PC-9 (cell line): ENCODE measurements at regions of chr12 and their contacts with region 1.

Region 1: GRCh38 chr12:55829967-55830600 is 697 bp upstream of the DNAJC14 start:
- DNase-seq: peak in 1 of 2 experiments; percentile 27
- H3K4me3 ChIP-seq: peak overlapping the region; percentile 96
- H3K27ac ChIP-seq: peak overlapping the region; percentile 36
- H3K4me1 ChIP-seq: peaks cover 39% of the 10 kb centered on the region
- H3K27me3 ChIP-seq: no peaks in the 10 kb centered on the region
- CTCF ChIP-seq: no peak

Region 2: GRCh38 chr12:55780685-55781084 is 49.4 kb before region 1 on chr12:
- CTCF ChIA-PET with region 1: no interaction called
- POLR2A ChIA-PET with region 1: no interaction called
- intact Hi-C with region 1: no loop called
- DNase-seq: no peak
- H3K4me3 ChIP-seq: no peak overlapping the region
- H3K27ac ChIP-seq: no peak overlapping the region
- H3K4me1 ChIP-seq: no peaks in the 10 kb centered on the region
- H3K27me3 ChIP-seq: no peaks in the 10 kb centered on the region
- CTCF ChIP-seq: no peak

Region 3: DNA sequence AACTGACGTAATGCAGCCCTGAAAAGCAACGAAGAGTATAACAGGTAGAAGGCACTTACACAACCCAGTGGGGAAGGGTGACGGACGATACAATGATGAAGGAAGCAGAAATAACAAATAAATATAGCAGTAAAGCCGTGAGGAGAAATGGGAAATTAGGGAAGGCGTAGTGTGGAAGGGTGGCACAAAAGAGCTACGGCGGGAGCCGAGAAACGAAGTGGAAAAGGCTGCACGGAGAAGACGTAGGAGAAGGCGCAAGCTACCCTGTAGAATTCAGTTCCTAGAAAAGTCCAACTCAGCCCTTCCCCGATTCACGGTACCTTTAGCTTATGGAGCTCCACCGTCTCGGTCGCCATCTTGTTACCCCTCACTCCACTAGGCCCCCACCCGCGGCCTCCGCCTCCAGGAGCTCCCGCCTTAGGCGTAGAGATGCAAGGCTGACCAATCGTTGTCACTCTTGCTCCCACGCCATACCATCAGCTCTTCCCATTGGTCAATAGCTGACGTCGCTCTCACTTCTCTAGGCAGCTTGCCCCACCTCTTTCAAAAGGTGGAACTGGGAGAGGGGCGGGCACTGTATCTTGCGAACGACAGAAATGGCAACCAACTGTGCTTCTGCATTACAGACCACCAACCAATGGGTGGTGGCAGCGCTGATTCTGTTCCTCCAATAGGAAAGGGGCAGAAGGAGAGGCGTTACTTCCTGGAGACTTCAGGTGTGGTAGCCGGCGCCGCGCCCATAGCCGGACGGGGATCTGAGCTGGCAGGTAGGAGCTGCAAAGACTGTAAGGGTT is 12.5 kb before region 1 on chr12 and contains the starts of genes ORMDL2 and SARNP:
- CTCF ChIA-PET with region 1: interaction called, 10 read pairs
- POLR2A ChIA-PET with region 1: interaction called, 59 read pairs
- intact Hi-C with region 1: loop called (anchors 1 kb)
- DNase-seq: peak; percentile 96 to 99
- H3K4me3 ChIP-seq: peak within 1 kb of the TSS; percentile 72
- H3K27ac ChIP-seq: peak within 1 kb of the TSS; percentile 51
- H3K4me1 ChIP-seq: peaks cover 18% of the 10 kb centered on the region
- H3K27me3 ChIP-seq: no peaks in the 10 kb centered on the region
- CTCF ChIP-seq: no peak
- total RNA-seq, gene ORMDL2: 22.5 and 22.9 TPM in 2 replicates
- total RNA-seq, gene SARNP: 65.6 and 74.8 TPM in 2 replicates

Region 4: DNA sequence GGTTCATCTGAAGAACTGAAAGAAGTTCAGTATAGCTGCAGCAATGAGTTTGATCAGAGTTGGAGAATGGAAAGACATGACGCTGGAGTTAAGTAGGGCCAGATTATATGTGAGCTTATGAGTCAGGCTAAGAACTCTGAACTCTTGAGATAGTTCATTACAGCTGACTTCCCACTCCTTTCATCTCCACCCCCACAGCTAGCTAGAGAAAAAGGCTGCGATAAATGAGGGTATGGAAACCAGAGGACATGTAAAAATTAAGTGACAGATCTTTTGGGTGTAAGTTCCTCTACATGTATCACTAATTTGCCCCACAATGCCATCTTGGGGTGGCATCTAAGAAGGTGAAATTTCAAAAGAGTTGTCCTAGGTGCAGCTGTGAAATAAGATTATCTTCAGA is 69.0 kb after region 1 on chr12:
- CTCF ChIA-PET with region 1: no interaction called
- POLR2A ChIA-PET with region 1: no interaction called
- intact Hi-C with region 1: no loop called
- DNase-seq: no peak
- H3K4me3 ChIP-seq: no peak overlapping the region
- H3K27ac ChIP-seq: no peak overlapping the region
- H3K4me1 ChIP-seq: no peaks in the 10 kb centered on the region
- H3K27me3 ChIP-seq: no peaks in the 10 kb centered on the region
- CTCF ChIP-seq: no peak

Region 5: GRCh38 chr12:55973598-55974307 is 143.7 kb after region 1 on chr12 and contains the start of gene RAB5B:
- CTCF ChIA-PET with region 1: no interaction called
- POLR2A ChIA-PET with region 1: interaction called, 14 read pairs
- intact Hi-C with region 1: no loop called
- DNase-seq: peak; percentile 98 to 100
- H3K4me3 ChIP-seq: peak within 1 kb of the TSS; percentile 93
- H3K27ac ChIP-seq: peak within 1 kb of the TSS; percentile 86
- H3K4me1 ChIP-seq: peaks cover 27% of the 10 kb centered on the region
- H3K27me3 ChIP-seq: no peaks in the 10 kb centered on the region
- CTCF ChIP-seq: peak; percentile 70
- total RNA-seq, gene RAB5B: 98.6 and 122 TPM in 2 replicates

Region 6: DNA sequence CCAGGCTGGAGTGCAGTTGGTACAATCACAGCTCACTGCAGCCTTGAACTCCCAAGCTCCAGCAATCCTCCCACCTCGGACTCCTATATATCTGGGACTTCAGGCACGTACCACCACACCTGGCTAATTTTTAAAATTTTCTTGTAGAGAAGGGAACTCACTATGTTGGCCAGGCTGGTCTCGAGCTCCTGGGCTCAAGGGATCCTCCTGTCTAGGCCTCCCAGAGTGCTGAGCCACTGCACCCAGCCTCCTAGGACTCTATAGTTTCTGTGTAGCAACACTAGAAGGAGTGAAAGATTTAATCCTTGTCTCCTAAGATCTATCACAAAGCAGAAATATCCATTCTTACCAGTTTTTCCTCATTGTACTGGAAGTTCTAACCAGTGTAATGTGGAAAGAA is 536.9 kb after region 1 on chr12:
- CTCF ChIA-PET with region 1: interaction called, 6 read pairs
- POLR2A ChIA-PET with region 1: interaction called, 16 read pairs
- intact Hi-C with region 1: no loop called
- DNase-seq: no peak
- H3K4me3 ChIP-seq: no peak overlapping the region
- H3K27ac ChIP-seq: no peak overlapping the region
- H3K4me1 ChIP-seq: no peaks in the 10 kb centered on the region
- H3K27me3 ChIP-seq: no peaks in the 10 kb centered on the region
- CTCF ChIP-seq: no peak

Region 7: GRCh38 chr12:57546438-57547383 is 1716.6 kb after region 1 on chr12 and contains the start of gene DCTN2:
- CTCF ChIA-PET with region 1: interaction called, 11 read pairs
- POLR2A ChIA-PET with region 1: no interaction called
- intact Hi-C with region 1: no loop called
- DNase-seq: peak; percentile 89 to 93
- H3K4me3 ChIP-seq: peak within 1 kb of the TSS; percentile 59
- H3K27ac ChIP-seq: peak within 1 kb of the TSS; percentile 45
- H3K4me1 ChIP-seq: peaks cover 9% of the 10 kb centered on the region
- H3K27me3 ChIP-seq: no peaks in the 10 kb centered on the region
- CTCF ChIP-seq: no peak; the same call in 1 of the 2 replicates
- total RNA-seq, gene DCTN2: 93.4 and 105 TPM in 2 replicates